H1 (cell line): ENCODE measurements at regions of chr4 and their contacts with region 1.

Region 1: DNA sequence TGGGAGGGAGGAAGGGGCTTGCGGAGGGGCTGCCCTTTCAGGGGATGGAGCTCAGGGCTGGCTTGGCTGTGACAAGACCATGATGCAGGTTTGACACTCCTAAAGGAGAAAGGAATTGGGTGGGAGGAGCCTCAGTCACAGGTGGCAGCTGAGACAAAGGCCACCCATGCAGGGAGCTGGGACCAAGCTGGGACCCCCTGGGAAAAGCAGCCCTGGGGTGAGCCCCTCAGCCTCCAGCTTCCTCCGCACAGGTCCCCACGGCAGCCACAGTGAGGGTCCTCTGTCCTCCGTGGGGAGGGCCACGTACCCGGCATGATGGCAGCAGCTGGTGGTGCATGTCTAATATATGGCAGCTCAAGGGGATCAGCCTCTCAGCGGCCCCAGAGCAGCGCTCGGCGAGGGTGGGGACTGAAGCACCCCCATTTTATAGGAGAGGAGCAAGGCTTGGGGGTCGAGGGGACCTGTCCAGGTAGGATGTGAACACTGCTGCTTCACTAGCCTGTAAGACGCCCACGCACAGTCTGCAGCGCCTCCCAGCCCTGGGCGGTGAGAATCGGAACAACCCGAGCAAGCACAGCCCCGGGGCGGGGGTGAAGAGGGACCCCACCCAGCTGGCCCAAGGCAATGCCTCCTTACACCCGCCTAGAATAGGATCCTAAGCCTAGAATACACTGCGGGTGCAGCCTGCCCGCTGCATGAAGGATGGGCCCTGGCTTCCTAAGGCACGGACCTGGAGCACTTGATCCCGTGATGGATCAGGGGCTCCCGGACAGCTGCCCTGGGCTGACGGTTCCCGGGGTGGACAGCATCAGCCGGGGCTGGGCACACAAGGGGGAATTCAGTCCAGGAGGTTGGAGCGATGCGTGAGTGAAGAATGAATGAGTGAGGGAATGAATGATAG is 17.5 kb downstream of the ADRA2C start:
- DNase-seq: peak in 1 of 2 experiments; percentile 86
- H3K4me3 ChIP-seq: no peak overlapping the region
- H3K27ac ChIP-seq: no peak overlapping the region
- H3K4me1 ChIP-seq: peaks cover 0 to 9% (median 8%) of the 10 kb centered on the region in 4 experiments; a peak in 5 of 7 replicates
- H3K27me3 ChIP-seq: no peaks in the 10 kb centered on the region
- CTCF ChIP-seq: peak in 2 of 3 experiments; percentile 79 to 81; a peak in 3 of 4 replicates
- EP300 ChIP-seq: no peak
- POLR2A ChIP-seq: no peak
- RAD21 ChIP-seq: peak; percentile 81 to 85

Region 2: GRCh38 chr4:3399277-3400194 is 384.1 kb before region 1 on chr4:
- CTCF ChIA-PET with region 1: no interaction called
- POLR2A ChIA-PET with region 1: no interaction called
- DNase-seq: no peak
- H3K4me3 ChIP-seq: no peak overlapping the region
- H3K27ac ChIP-seq: no peak overlapping the region
- H3K4me1 ChIP-seq: no peaks in the 10 kb centered on the region; a peak in 1 of 7 replicates
- H3K27me3 ChIP-seq: no peaks in the 10 kb centered on the region
- CTCF ChIP-seq: no peak
- EP300 ChIP-seq: no peak
- POLR2A ChIP-seq: no peak
- RAD21 ChIP-seq: no peak

Region 3: DNA sequence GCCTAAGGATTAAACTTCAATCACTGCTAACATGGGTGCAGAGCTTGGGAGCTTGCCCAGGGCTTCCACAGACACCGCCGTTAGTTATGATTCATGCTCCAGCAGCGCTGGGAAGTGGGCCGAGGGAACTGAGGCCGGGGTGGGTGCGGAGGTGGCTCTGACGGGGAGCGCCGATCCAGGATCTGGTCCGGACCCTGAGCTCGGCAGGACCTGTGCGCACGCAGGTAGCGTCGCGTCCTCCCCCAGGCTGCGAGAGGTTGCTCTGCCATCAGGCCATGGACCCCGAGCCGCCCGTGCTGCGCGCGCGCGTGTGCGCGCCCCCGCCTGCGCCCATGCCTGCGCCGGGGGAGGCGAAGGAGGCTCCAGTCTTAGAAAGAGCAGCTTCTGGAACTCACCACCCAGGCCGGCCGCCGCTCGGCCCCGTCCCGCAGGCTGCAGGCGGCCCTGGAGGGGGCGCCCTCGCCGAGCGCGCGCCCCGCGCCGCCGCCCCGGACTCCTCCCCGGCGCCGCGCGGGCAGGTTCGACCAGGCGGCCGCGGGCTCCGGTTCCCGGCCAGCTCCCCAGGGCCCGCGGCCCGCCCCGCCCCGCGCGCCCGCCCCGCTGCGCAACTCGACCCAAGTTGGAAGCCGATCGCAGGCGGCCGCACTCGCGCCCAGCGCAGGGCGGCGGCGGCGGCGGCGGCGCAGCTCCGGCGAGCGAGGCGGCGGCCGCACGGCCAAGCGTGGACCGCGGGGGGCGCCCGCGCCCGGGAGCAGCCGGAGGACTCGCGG is 18.2 kb before region 1 on chr4:
- CTCF ChIA-PET with region 1: interaction called, 110 read pairs
- POLR2A ChIA-PET with region 1: interaction called, 7 read pairs
- DNase-seq: peak in 1 of 2 experiments; percentile 83
- H3K4me3 ChIP-seq: peak overlapping the region; percentile 38 to 59 (median 46)
- H3K27ac ChIP-seq: no peak overlapping the region
- H3K4me1 ChIP-seq: peaks cover 0 to 13% (median 4%) of the 10 kb centered on the region in 4 experiments; a peak in 5 of 7 replicates
- H3K27me3 ChIP-seq: peaks cover 4 to 38% (median 28%) of the 10 kb centered on the region in 4 experiments
- CTCF ChIP-seq: peak in 2 of 3 experiments; percentile 43 to 50; a peak in 3 of 4 replicates
- EP300 ChIP-seq: no peak
- POLR2A ChIP-seq: no peak
- RAD21 ChIP-seq: no peak; a peak in 2 of 4 replicates

Region 4: DNA sequence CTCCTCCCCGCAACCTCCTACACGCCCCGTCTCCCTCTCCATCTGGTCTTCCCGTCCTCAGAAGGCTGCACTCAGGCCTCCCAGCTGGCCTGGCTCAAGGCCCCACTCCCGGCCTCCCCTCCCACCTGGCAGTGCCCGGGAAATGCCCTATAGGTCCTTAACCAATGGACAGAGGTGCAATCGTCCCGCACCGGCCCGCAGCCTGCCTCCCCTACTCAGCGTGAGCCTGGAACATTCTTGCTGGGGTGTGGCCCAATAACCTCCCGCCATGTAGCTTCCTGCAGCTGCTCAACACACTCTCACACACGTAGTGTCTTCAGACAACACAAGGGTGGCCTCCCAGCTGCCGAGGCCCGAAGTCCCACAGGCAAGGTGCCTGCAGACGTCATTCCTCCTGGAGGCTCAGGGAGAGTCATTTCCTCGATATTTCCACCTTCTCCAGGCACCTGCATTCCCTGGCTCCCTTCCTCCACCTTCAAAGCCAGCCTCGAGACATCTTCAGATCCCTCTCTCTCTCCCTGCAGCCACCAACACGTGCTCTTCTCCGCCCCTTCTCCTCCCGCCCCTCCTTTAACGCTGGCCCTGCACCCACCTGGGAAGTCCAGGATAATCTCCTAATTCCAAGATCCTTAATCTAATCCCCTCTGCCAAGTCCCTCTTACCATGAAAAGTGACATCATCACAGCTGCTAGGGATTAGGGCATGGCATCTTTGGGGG is 38.7 kb after region 1 on chr4:
- CTCF ChIA-PET with region 1: interaction called, 18 read pairs
- POLR2A ChIA-PET with region 1: no interaction called
- DNase-seq: no peak
- H3K4me3 ChIP-seq: no peak overlapping the region
- H3K27ac ChIP-seq: no peak overlapping the region
- H3K4me1 ChIP-seq: peaks cover 0 to 13% (median 5%) of the 10 kb centered on the region in 4 experiments; a peak in 5 of 7 replicates
- H3K27me3 ChIP-seq: no peaks in the 10 kb centered on the region; a peak in 1 of 7 replicates
- CTCF ChIP-seq: no peak
- EP300 ChIP-seq: no peak
- POLR2A ChIP-seq: no peak
- RAD21 ChIP-seq: no peak

Region 5: DNA sequence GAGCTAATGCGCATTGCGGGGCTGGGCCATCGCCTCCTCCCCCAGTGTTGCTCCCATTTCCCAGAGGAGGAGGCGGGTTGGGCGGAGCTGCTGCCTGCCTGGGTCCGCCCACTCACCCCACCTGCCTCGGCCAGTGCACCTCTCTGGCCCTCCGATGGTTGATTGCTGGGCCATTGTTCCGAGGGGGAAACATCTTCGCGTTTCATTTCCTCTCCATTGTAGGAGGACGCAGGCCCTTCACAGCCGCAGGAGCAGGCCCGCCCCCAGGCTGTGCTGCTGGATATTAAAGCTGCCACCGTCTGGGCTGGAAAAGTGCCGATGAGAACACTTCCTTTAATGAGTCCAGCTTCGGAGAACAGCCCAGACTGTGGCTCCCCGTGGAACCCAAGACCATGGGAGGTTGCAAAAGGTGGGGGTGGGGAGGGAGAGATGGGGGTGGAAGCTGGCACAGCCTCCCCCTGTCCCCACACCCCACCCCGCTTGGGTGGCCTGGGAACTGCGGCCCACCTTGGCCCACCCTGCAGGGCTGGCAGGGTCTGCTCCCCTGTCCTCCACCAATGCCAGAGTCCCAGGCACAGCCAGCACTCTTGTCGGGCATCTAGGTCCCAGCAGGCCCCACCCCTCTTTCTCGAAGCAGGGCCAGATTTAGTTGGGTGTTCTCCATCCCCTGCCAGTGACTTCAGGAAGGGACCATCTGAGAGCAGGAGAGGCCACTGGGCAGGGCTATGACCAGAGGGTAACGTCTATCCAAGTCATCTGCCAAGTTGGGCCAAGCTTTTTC is 79.2 kb after region 1 on chr4:
- CTCF ChIA-PET with region 1: interaction called, 16 read pairs
- POLR2A ChIA-PET with region 1: interaction called, 3 read pairs
- DNase-seq: peak; percentile 70 to 87
- H3K4me3 ChIP-seq: peak overlapping the region; percentile 4 to 51 (median 24); a peak in 5 of 8 replicates
- H3K27ac ChIP-seq: peak overlapping the region; percentile 62
- H3K4me1 ChIP-seq: peaks cover 3 to 23% (median 15%) of the 10 kb centered on the region in 4 experiments
- H3K27me3 ChIP-seq: no peaks in the 10 kb centered on the region
- CTCF ChIP-seq: no peak
- EP300 ChIP-seq: no peak
- POLR2A ChIP-seq: peak in 1 of 2 experiments; percentile 44; a peak in 1 of 3 replicates
- RAD21 ChIP-seq: no peak; a peak in 1 of 4 replicates

Region 6: DNA sequence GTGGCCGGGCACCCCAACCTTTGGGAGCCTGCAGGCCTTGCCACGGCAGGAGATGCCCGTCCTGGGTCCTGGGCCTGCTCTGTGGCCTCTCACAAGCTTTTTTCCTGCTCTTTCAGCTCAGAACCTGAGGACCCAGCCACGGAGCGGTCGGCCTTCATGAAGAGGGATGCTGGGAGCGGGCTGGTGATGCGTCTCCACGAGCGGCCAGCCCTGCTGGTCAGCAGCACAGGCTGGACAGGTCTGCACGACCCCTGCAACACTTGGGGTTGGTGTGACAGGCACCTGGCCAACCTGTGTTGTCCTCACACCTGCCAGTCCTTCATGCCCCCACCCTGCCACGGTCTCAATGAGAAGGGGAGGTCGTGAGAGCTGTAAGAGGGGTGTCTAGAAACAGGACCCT is 152.5 kb after region 1 on chr4:
- CTCF ChIA-PET with region 1: interaction called, 16 read pairs
- POLR2A ChIA-PET with region 1: no interaction called
- DNase-seq: no peak
- H3K4me3 ChIP-seq: no peak overlapping the region
- H3K27ac ChIP-seq: no peak overlapping the region
- H3K4me1 ChIP-seq: peaks cover 0 to 4% (median 3%) of the 10 kb centered on the region in 4 experiments; a peak in 4 of 7 replicates
- H3K27me3 ChIP-seq: no peaks in the 10 kb centered on the region
- CTCF ChIP-seq: no peak
- EP300 ChIP-seq: no peak
- POLR2A ChIP-seq: no peak
- RAD21 ChIP-seq: no peak